GM12878 (cell line): ENCODE measurements at regions of chr4 and their contacts with region 1.

Region 1: GRCh38 chr4:89110986-89111832 is at the start of gene TIGD2:
- DNase-seq: peak; percentile 47
- ATAC-seq: peak; percentile 94
- H3K4me3 ChIP-seq: peak within 1 kb of the TSS; percentile 95
- H3K27ac ChIP-seq: peak within 1 kb of the TSS; percentile 47
- H3K4me1 ChIP-seq: 0 out of 2 replicates have a peak, but pooled peaks cover 3% of the 10 kb centered on the region
- H3K27me3 ChIP-seq: no peaks in the 10 kb centered on the region
- CTCF ChIP-seq: peak; percentile 66 to 83 (median 75)
- EP300 ChIP-seq: no peak
- POLR2A ChIP-seq: peak; percentile 98
- RAD21 ChIP-seq: peak; percentile 60
- polyA plus RNA-seq, gene TIGD2: 2.4 to 3.6 TPM

Region 2: GRCh38 chr4:88672987-88673386 is 438.2 kb before region 1 on chr4:
- CTCF ChIA-PET with region 1: no interaction called
- POLR2A ChIA-PET with region 1: no interaction called
- RAD21 ChIA-PET with region 1: no interaction called
- SMC1A ChIA-PET with region 1: no interaction called
- in situ Hi-C with region 1: no loop called
- intact Hi-C with region 1: loop called (anchors 10 kb)
- DNase-seq: no peak
- ATAC-seq: peak; percentile 91
- H3K4me3 ChIP-seq: no peak overlapping the region
- H3K27ac ChIP-seq: no peak overlapping the region
- H3K4me1 ChIP-seq: no peaks in the 10 kb centered on the region
- H3K27me3 ChIP-seq: no peaks in the 10 kb centered on the region
- CTCF ChIP-seq: peak; percentile 50 to 67 (median 64)
- EP300 ChIP-seq: no peak
- POLR2A ChIP-seq: no peak
- RAD21 ChIP-seq: peak; percentile 51

Region 3: DNA sequence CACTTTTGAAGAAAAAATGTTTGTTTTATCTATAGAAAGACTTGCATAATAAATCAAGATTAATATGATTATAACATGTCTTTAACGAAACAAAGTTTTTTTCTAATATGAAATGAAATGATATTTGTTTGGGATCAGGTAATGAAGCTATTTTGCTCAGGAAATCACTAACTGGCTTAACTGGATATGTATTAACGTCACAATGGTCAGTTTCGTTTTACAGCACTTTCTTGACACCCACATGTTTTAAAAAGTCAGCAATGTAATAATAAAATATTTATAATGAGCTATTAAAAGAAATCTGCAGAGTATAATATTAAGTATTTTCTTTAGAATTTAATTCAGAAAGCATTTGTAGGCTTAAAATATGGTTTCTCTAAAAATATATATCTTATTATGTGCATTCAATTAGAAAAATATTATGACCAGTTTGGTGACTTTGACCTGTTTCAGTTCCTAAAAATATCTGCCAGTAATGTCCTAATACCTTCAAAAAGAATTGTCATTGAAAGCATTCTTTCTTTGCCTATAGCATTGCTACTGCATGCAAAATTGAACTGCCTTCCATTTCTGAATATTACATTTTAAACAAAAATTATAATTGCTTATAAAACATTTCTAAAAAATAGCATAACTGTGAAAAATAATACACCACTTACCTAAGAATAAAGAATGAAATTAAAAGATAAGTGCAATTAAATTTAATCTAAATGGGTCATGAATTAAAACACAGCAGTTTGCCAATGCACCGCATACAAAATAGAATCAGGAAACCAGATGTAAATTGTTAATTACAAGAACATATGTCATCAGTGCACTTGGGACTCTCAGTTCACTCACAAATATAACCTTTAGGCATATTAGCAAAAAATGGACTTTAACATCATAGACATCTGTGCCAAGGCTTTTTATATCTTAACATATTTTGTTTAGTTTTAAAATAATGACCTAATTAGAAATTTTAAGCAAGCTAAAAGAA is 31.8 kb after region 1 on chr4:
- CTCF ChIA-PET with region 1: interaction called, 5 read pairs
- POLR2A ChIA-PET with region 1: interaction called, 3 read pairs
- RAD21 ChIA-PET with region 1: interaction called, 7 read pairs
- SMC1A ChIA-PET with region 1: interaction called, 16 read pairs
- in situ Hi-C with region 1: no loop called
- intact Hi-C with region 1: loop called (anchors 2 kb)
- DNase-seq: no peak
- ATAC-seq: peak; percentile 93
- H3K4me3 ChIP-seq: no peak overlapping the region
- H3K27ac ChIP-seq: no peak overlapping the region
- H3K4me1 ChIP-seq: no peaks in the 10 kb centered on the region
- H3K27me3 ChIP-seq: no peaks in the 10 kb centered on the region
- CTCF ChIP-seq: no peak
- EP300 ChIP-seq: peak; percentile 41 to 63; a peak in 2 of 4 replicates
- POLR2A ChIP-seq: no peak
- RAD21 ChIP-seq: no peak